ENCODE measurements at regions of chr14 and their contacts with region 1.

Region 1: GRCh38 chr14:89406941-89407340 is 10.1 kb downstream of the FOXN3 start:
- DNase-seq: no peak
- ATAC-seq: peak in 3 of 4 donors; percentile 29 to 69 (median 57)
- H3K4me3 ChIP-seq: no peak overlapping the region
- H3K27ac ChIP-seq: peak overlapping the region in 5 of 12 donors; percentile 4 to 62 (median 17)
- H3K4me1 ChIP-seq: peaks cover 12 to 62% (median 50%) of the 10 kb centered on the region in 12 donors
- H3K27me3 ChIP-seq: no peaks in the 10 kb centered on the region
- CTCF ChIP-seq: no peak
- POLR2A ChIP-seq: no peak

Region 2: DNA sequence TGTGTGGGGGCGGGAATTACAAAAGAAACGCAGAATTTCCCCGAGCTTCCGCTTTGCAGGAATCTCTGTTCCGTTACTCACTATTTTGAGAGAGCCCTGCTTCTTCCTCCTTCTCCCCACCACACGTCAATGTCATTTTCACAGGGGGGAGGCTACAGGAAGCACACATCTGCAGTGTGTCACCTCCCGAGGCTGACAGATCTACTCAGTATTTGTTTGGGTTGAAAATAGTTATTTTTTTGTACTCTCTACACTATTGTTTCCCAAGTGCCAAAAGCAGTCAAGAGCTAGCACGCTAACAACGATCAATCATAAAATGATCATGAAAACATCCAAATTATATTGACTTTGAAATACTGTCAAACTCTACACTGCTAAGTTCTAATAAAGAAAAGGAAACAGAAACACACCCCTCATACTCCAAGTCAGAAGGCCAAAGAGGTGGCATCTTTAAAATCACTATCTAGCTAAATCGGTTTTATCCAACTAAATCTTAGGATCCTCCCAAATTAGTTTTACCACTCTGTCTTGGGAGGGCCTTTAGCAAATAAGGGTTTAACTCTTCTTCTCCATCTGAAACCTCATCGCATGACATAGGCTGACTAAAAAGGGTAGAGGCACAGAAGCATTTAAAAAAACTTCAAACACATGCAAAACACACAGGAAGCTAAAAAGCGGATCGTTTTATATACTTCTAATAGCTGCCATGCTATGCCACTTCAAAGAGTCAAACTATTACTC is 41.7 kb before region 1 on chr14:
- intact Hi-C with region 1: loop called in 1 of 10 experiments (anchors 5 kb)
- DNase-seq: peak in 2 of 5 donors; percentile 49 to 57
- ATAC-seq: peak in 3 of 4 donors; percentile 49 to 85 (median 66)
- H3K4me3 ChIP-seq: peak overlapping the region in 1 of 12 donors; percentile 33
- H3K27ac ChIP-seq: peak overlapping the region in 5 of 12 donors; percentile 2 to 85 (median 27)
- H3K4me1 ChIP-seq: peaks cover 7 to 72% (median 49%) of the 10 kb centered on the region in 12 donors
- H3K27me3 ChIP-seq: no peaks in the 10 kb centered on the region
- CTCF ChIP-seq: no peak
- POLR2A ChIP-seq: no peak

Region 3: DNA sequence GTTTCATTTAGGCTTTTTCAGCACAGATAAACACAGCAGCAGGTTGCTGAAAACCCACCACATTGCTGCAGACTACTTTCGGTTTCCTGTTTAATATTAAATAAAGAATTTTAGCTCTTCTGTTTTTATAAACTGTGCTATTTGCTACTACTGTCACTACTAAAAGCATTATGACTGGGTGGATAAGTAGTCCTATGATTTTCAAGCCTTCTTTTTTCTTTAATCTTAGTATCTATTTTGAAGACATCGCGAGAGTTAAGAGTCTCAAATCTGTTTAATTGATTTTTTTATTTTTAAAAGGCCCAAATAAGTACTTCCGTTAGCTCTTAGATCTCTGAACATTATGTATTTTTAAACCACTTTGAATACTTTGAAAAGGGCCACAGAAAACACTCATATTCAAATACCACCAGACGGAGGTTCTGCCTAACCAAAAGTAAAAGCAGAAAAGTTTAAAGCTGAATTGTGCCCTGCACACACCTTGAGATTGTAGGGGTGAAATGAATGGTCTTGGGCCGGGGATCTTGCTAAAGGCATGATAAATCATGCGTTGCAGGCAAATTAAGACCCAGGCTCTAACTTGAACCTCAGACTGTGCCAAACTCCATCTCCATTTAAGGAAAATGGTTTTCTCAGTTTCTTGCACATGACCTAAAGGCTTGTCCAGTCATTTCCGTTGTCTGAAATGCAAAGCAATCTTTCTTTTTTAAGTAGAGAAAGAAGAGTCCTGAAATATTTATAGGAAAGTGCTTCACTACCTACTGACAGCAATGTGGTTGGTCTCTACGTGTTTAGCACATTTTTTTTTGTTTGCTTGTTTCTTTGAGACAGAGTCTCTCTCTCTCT is 23.7 kb after region 1 on chr14:
- intact Hi-C with region 1: no loop called
- DNase-seq: no peak
- ATAC-seq: peak in 3 of 4 donors; percentile 25 to 53 (median 38)
- H3K4me3 ChIP-seq: peak overlapping the region in 11 of 12 donors; percentile 2 to 54 (median 37)
- H3K27ac ChIP-seq: peak overlapping the region; percentile 28 to 93 (median 64)
- H3K4me1 ChIP-seq: peaks cover 8 to 46% (median 36%) of the 10 kb centered on the region in 12 donors
- H3K27me3 ChIP-seq: no peaks in the 10 kb centered on the region
- CTCF ChIP-seq: no peak
- POLR2A ChIP-seq: no peak

Region 4: GRCh38 chr14:89493877-89494634 is 87.1 kb after region 1 on chr14:
- intact Hi-C with region 1: no loop called
- DNase-seq: no peak
- ATAC-seq: peak; percentile 49 to 72 (median 64)
- H3K4me3 ChIP-seq: peak overlapping the region in 2 of 12 donors; percentile 4 to 18
- H3K27ac ChIP-seq: no peak overlapping the region
- H3K4me1 ChIP-seq: peaks cover 0 to 31% (median 13%) of the 10 kb centered on the region in 12 donors
- H3K27me3 ChIP-seq: no peaks in the 10 kb centered on the region
- CTCF ChIP-seq: no peak
- POLR2A ChIP-seq: no peak